ACHN (cell line): ENCODE measurements at regions of chr2 and their contacts with region 1.

Region 1: GRCh38 chr2:65040400-65041261 is 15.6 kb upstream of the CEP68 start:
- DNase-seq: peak; percentile 85

Region 2: GRCh38 chr2:64819774-64820696 is 220.6 kb before region 1 on chr2:
- in situ Hi-C with region 1: no loop called
- DNase-seq: no peak

Region 3: GRCh38 chr2:64865073-64865830 is 175.4 kb before region 1 on chr2:
- in situ Hi-C with region 1: no loop called
- DNase-seq: peak; percentile 73

Region 4: GRCh38 chr2:64945973-64946768 is 94.5 kb before region 1 on chr2:
- in situ Hi-C with region 1: loop called (anchors 25 kb)
- DNase-seq: no peak

Region 5: GRCh38 chr2:65329525-65329924 is 288.9 kb after region 1 on chr2:
- in situ Hi-C with region 1: no loop called
- DNase-seq: no peak